Activated CD4-positive, alpha-beta T cell treated with anti-CD3 and anti-CD28 coated beads for 36 hours (primary cell): ENCODE measurements at regions of chr6 and their contacts with region 1.

Region 1: GRCh38 chr6:30769088-30769852 is 24.9 kb upstream of the IER3 start:
- DNase-seq: peak; percentile 90
- ATAC-seq: peak; percentile 75
- H3K4me3 Mint-ChIP-seq: peak overlapping the region; percentile 63
- H3K27ac Mint-ChIP-seq: peak overlapping the region; percentile 98
- H3K4me1 Mint-ChIP-seq: peaks cover 86% of the 10 kb centered on the region
- H3K27me3 Mint-ChIP-seq: no peaks in the 10 kb centered on the region

Region 2: DNA sequence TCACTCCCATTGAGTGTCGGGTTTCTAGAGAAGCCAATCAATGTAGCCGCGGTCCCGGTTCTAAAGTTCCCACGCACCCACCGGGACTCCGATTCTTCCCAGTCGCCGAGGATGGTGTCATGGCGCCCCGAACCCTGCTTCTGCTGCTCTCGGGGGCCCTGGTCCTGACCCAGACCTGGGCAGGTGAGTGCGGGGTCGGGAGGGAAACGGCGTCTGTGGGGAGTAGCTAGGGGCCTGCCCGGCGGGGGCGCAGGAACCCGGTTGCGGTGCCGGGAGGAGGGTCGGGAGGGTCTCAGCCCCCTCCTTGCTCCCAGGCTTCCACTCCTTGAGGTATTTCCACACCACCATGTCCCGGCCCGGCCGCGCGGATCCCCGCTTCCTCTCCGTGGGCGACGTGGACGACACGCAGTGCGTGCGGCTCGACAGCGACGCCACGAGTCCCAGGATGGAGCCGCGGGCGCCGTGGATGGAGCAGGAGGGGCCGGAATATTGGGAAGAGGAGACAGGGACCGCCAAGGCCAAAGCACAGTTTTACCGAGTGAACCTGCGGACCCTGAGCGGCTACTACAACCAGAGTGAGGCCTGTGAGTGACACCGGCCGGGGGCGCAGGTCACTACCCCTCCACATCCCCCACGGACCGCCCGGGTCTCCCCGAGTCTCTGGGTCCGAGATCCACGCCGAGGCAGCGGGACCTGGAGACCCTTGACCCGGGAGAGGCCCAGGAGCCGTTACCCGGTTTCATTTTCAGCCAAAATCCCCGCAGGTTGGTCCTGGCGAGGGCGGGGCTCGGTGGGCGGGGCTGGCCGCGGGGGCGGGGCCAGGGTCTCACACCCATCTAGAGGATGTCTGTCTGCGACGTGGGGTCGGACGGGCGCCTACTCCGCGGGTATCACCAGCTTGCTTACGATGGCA is 976.9 kb before region 1 on chr6:
- CTCF ChIA-PET with region 1: no interaction called
- POLR2A ChIA-PET with region 1: no interaction called
- intact Hi-C with region 1: no loop called
- DNase-seq: peak; percentile 82
- ATAC-seq: peak; percentile 86
- H3K4me3 Mint-ChIP-seq: peak overlapping the region; percentile 62
- H3K27ac Mint-ChIP-seq: no peak overlapping the region
- H3K4me1 Mint-ChIP-seq: peaks cover 12% of the 10 kb centered on the region
- H3K27me3 Mint-ChIP-seq: peaks cover 34% of the 10 kb centered on the region

Region 3: GRCh38 chr6:30781743-30782424 is 12.6 kb after region 1 on chr6:
- CTCF ChIA-PET with region 1: interaction called, 12 read pairs
- POLR2A ChIA-PET with region 1: interaction called, 4 read pairs
- intact Hi-C with region 1: no loop called
- DNase-seq: peak; percentile 80
- ATAC-seq: peak; percentile 53
- H3K4me3 Mint-ChIP-seq: peak overlapping the region; percentile 63
- H3K27ac Mint-ChIP-seq: peak overlapping the region; percentile 90
- H3K4me1 Mint-ChIP-seq: peaks cover 74% of the 10 kb centered on the region
- H3K27me3 Mint-ChIP-seq: no peaks in the 10 kb centered on the region

Region 4: GRCh38 chr6:30787954-30788353 is 18.7 kb after region 1 on chr6:
- CTCF ChIA-PET with region 1: interaction called, 9 read pairs
- POLR2A ChIA-PET with region 1: interaction called, 10 read pairs
- intact Hi-C with region 1: loop called (anchors 1 kb)
- DNase-seq: peak; percentile 75
- ATAC-seq: peak; percentile 73
- H3K4me3 Mint-ChIP-seq: peak overlapping the region; percentile 59
- H3K27ac Mint-ChIP-seq: peak overlapping the region; percentile 96
- H3K4me1 Mint-ChIP-seq: peaks cover 67% of the 10 kb centered on the region
- H3K27me3 Mint-ChIP-seq: no peaks in the 10 kb centered on the region